ENCODE measurements at regions of chr16 and their contacts with region 1.

Region 1: GRCh38 chr16:87324411-87325275 is 7.5 kb upstream of the C16orf95 start:
- DNase-seq: peak in 2 of 5 donors; percentile 38 to 61
- ATAC-seq: peak in 3 of 4 donors; percentile 47 to 58 (median 54)
- H3K4me3 ChIP-seq: no peak overlapping the region
- H3K27ac ChIP-seq: no peak overlapping the region
- H3K4me1 ChIP-seq: peaks cover 0 to 33% (median 6%) of the 10 kb centered on the region in 12 donors
- H3K27me3 ChIP-seq: no peaks in the 10 kb centered on the region
- CTCF ChIP-seq: peak; percentile 72 to 91 (median 82)
- POLR2A ChIP-seq: no peak

Region 2: DNA sequence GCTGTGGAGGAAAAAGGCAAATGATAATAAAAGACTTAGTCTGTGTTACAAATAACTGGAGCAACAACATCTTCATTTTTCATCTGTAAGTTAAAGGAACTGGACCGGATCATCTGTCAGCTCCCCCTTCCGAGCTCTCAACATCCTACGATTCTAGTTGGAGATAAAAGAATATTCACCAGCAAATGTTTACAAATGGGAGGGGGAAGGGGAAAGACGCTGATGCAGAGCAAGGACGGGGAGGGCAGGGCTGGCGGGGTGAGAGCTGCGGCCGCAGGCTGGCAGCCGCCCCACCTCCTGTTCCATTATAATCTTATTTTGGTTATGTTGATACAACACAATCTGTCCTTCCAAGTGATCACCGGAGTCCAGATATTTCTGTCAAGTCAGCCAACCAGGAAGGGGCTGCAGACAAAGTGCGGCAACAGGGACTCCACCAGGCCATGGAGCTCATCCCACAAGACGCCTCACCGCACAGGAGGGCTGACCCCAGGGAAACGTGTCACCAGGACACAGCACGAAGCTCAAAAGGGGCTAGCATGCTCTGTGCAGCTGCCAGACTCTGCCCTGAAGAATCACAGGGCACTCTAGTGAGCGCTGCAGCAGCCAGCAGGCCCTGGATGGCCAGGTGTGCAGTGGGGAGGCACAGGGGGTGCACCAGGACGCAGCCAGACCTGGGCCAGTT is 39.3 kb after region 1 on chr16:
- intact Hi-C with region 1: loop called in 3 of 10 experiments (anchors 5 kb)
- DNase-seq: peak; percentile 51 to 66 (median 57)
- ATAC-seq: peak; percentile 84 to 90 (median 84)
- H3K4me3 ChIP-seq: peak overlapping the region in 6 of 12 donors; percentile 1 to 27 (median 19)
- H3K27ac ChIP-seq: peak overlapping the region; percentile 48 to 88 (median 76)
- H3K4me1 ChIP-seq: peaks cover 3 to 89% (median 35%) of the 10 kb centered on the region in 12 donors
- H3K27me3 ChIP-seq: peaks cover 0 to 29% (median 0%) of the 10 kb centered on the region in 9 donors
- CTCF ChIP-seq: no peak
- POLR2A ChIP-seq: no peak

Region 3: DNA sequence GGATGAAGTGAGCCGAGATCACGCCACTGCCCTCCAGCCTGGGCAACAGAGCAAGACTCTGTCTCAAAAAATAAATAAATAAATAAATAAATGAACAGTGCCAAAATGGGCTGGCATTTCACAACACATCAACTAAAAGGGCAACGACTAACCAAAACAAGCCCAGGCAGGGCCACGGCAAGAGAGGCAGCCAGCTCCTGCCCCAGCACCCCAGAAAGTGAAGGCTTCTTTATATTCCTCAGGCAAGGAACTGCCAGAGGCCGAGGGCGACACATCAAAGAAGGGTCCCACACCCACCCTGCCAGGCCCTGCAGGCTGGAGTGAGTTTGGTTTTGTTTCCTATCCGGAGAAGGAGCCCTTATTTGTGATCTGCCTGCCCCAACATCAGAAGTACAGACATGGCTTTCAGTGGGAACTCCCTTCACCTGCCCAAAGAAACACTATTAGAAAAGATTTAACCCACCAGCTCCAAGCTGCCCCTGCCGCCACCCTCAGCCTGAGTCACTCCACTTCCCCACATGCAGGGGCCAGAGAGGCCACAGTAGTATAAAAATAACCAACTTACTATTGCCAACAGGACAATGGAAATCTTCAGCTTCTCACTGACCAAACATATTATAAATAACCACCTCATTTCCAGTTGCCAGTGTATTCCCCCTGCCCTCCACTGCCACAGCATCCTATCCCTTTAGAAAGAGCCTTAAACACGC is 50.9 kb after region 1 on chr16:
- intact Hi-C with region 1: loop called in 6 of 10 experiments (anchors 5 kb)
- DNase-seq: peak in 3 of 5 donors; percentile 30 to 47 (median 36)
- ATAC-seq: peak; percentile 80 to 85 (median 82)
- H3K4me3 ChIP-seq: peak overlapping the region in 5 of 12 donors; percentile 0 to 19 (median 11)
- H3K27ac ChIP-seq: peak overlapping the region in 11 of 12 donors; percentile 72 to 93 (median 84)
- H3K4me1 ChIP-seq: peaks cover 4 to 88% (median 44%) of the 10 kb centered on the region in 12 donors
- H3K27me3 ChIP-seq: peaks cover 0 to 21% (median 0%) of the 10 kb centered on the region in 9 donors
- CTCF ChIP-seq: no peak
- POLR2A ChIP-seq: no peak

Region 4: DNA sequence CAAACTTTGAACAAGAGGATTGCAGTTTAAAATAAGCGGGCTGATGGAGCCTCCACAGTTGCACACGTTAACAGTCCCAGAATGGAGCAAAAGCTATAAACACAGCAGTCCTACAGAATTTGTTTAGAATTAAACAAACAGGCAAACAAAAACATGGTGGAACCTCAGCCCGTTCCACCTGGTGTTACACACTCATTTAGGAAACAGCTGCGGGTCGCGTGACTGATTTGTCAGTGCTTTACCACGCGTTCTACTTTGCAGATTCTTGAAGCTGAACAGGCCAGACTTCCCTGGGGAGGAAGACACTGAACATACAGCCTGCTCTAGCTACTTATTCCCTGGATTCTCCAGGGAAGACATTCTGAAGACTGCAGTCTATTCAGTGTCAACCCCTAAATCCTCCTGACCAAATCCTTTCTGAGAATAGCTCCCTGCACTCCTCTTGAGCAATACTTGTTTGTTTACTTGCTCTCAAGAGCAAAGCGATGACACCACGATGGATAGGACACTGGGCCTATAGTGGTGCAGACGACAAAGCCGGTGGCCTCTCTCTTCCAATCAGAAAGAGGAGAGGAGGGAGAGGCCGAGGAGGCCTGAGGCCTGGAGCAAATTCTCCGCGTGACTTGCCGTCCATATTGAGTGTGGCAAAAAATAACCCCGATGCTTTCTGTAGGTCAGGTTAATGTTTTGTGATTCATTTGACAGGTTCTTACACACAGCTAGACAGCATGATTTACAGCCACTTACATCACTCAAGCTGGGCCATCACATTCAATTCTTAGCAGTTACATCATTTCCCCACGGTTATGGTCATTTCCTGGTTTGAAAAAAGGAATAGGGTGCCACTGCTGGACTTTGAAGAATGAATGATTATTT is 63.5 kb after region 1 on chr16:
- intact Hi-C with region 1: loop called in 8 of 10 experiments (anchors 2 to 5 kb)
- DNase-seq: peak; percentile 90 to 96 (median 96)
- ATAC-seq: peak; percentile 71 to 88 (median 82)
- H3K4me3 ChIP-seq: peak overlapping the region in 9 of 12 donors; percentile 22 to 42 (median 29)
- H3K27ac ChIP-seq: peak overlapping the region; percentile 80 to 96 (median 90)
- H3K4me1 ChIP-seq: peaks cover 6 to 45% (median 29%) of the 10 kb centered on the region in 12 donors
- H3K27me3 ChIP-seq: no peaks in the 10 kb centered on the region
- CTCF ChIP-seq: no peak
- POLR2A ChIP-seq: peak in 1 of 2 donors; percentile 66

Region 5: GRCh38 chr16:87540945-87541877 is 216.6 kb after region 1 on chr16:
- intact Hi-C with region 1: loop called in 1 of 10 experiments (anchors 10 kb)
- DNase-seq: peak; percentile 44 to 80 (median 70)
- ATAC-seq: peak; percentile 47 to 79 (median 65)
- H3K4me3 ChIP-seq: peak overlapping the region in 8 of 12 donors; percentile 11 to 48 (median 25)
- H3K27ac ChIP-seq: peak overlapping the region; percentile 34 to 69 (median 56)
- H3K4me1 ChIP-seq: peaks cover 0 to 26% (median 11%) of the 10 kb centered on the region in 12 donors
- H3K27me3 ChIP-seq: peaks cover 0 to 7% (median 0%) of the 10 kb centered on the region in 9 donors
- CTCF ChIP-seq: no peak
- POLR2A ChIP-seq: no peak

Region 6: DNA sequence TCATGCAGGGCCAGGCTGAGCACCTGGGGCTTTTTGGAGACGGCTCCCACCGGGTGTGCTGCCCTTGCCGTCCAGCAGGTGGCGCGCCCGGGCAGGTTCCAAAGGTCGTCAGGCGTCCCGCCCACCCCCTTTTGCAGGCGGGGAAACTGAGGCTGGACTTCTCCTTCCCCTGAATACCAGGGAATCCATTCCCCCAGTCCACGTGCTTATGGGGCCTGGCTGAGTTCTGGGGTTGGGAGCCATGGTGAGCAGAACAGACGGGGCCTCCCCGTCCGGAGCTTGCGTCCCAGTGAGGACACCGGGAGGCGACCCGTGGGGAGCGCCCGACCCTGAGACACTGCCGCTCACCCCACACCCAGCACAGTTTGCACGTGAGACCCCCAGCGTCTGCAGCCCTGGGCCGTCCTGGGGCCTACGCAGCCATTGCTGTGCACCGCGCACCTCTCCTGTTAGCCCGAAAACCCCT is 225.9 kb after region 1 on chr16:
- intact Hi-C with region 1: loop called in 2 of 10 experiments (anchors 10 kb)
- DNase-seq: peak; percentile 42 to 78 (median 48)
- ATAC-seq: peak; percentile 33 to 50 (median 48)
- H3K4me3 ChIP-seq: no peak overlapping the region
- H3K27ac ChIP-seq: no peak overlapping the region
- H3K4me1 ChIP-seq: peaks cover 0 to 7% (median 0%) of the 10 kb centered on the region in 12 donors
- H3K27me3 ChIP-seq: peaks cover 0 to 15% (median 0%) of the 10 kb centered on the region in 9 donors
- CTCF ChIP-seq: peak; percentile 80 to 98 (median 92)
- POLR2A ChIP-seq: no peak

Region 7: GRCh38 chr16:87930456-87930855 is 605.8 kb after region 1 on chr16:
- intact Hi-C with region 1: no loop called
- DNase-seq: no peak
- ATAC-seq: peak in 1 of 4 donors; percentile 31
- H3K4me3 ChIP-seq: no peak overlapping the region
- H3K27ac ChIP-seq: no peak overlapping the region
- H3K4me1 ChIP-seq: peaks cover 0 to 8% (median 0%) of the 10 kb centered on the region in 12 donors
- H3K27me3 ChIP-seq: peaks cover 0 to 4% (median 0%) of the 10 kb centered on the region in 9 donors
- CTCF ChIP-seq: peak in 2 of 12 donors; percentile 7 to 13
- POLR2A ChIP-seq: no peak

Measured in heart left ventricle (tissue), 16 donors.